Transverse colon (tissue), 4 donors: ENCODE measurements at regions of chr17 and their contacts with region 1.

Region 1: DNA sequence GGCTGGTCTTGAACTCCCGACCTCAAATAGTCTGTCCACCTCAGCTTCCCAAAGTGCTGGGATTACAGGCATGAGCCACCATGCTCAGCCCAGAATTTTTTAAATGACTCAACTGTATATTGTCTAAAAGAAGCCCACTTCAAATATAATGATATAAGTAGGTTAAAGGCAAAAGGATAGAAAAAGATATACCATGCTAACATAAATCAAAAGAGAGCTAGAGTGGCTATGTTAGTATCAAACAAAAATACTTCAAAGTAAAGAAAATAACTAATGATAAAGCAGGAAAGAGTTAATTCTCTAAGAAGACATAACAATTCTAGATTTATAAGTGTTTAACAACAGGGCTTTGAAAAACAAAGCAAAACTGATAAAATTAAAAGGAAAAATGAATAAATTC is 13.3 kb upstream of the MPO start:
- DNase-seq: no peak
- H3K4me3 ChIP-seq: no peak overlapping the region
- H3K27ac ChIP-seq: no peak overlapping the region
- H3K4me1 ChIP-seq: no peaks in the 10 kb centered on the region
- H3K27me3 ChIP-seq: peaks cover 34% of the 10 kb centered on the region
- CTCF ChIP-seq: no peak
- EP300 ChIP-seq: no peak
- POLR2A ChIP-seq: no peak

Region 2: DNA sequence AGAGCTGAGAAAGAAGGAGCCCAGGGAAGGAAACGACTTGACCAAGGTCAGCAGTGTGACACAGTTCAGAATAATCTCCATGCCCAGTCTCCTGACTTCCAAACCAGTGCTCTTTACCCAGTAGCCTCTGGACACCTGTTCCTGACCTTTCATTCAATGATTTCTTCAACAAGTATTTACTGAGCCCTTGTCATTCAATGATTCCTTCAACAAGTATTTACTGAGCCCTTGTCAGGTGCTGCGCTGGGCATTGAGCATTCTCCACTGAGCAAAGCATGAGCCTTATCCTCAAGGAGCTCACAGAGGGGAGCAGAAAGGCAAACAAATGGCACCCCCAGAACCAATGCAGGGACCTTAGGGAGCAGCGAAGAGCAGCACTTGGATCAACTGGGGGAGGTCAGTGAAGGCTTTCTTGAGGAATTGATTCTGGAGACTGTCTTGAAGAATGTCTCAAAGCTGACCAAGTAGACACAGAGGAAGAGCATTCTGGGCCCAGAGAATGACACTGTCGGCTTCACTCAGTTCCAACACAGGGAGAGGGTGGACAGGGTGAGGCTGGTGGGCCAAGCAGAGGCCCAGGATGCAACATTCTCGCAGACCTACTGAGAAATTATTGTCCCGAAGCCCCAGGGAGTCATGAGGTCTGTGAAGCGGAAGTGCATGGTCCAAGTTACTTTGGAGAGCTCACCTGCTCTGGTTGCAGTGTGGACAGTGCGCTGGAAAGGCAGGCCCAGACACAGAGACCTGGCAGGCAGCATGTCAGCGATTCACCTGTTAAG is 10.3 kb before region 1 on chr17:
- in situ Hi-C with region 1: no loop called
- intact Hi-C with region 1: loop called (anchors 1 kb)
- DNase-seq: no peak
- H3K4me3 ChIP-seq: no peak overlapping the region
- H3K27ac ChIP-seq: no peak overlapping the region
- H3K4me1 ChIP-seq: peaks cover 0 to 7% (median 3%) of the 10 kb centered on the region in 4 donors
- H3K27me3 ChIP-seq: peaks cover 39% of the 10 kb centered on the region
- CTCF ChIP-seq: no peak
- EP300 ChIP-seq: no peak
- POLR2A ChIP-seq: no peak